ENCODE measurements at regions of chr5 and their contacts with region 1.

Region 1: DNA sequence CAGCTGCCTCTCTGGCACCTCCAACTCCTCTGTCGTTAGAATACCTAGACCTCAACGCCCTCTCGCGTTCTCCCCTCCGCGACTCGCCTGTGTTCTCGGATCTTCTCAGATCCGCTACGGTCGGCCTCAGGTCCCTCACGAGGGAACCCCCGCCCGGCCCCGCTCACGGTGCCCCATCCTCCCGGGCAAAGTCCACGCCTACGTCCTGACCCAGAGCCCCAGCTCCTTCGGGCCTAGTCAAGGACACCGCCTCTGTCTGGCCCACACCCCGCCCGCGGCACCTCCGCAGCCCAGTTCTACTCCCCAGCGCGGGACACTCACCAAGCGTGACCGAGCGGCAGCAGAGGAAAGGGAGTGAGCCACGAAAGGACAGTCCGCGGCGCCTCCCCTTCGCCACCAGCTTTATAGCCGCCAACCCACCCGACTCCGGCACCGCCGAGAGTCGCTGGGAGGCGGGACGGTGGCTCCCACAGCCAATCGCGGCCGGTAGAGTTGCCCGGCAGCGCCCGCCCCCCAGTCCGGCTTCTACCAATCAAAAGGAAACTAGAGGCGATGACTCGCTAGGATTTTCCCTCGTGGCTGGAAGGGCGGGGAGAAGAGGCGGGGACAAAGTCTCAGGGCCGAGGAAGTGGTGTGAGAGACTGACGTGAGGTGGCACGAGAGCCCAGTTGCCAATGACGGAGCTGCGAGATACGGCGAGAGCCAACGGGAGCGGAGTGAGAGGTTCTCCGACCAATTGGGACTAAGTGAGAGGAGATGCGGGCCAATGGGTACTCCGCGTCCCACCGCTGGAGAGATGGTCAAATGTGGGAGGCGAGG is at the start of gene HMGCS1:
- DNase-seq: peak; percentile 99
- ATAC-seq: peak; percentile 92
- H3K4me3 ChIP-seq: peak within 1 kb of the TSS; percentile 88 to 91
- H3K27ac ChIP-seq: peak within 1 kb of the TSS; percentile 71
- H3K4me1 ChIP-seq: peaks cover 11 to 32% of the 10 kb centered on the region in 2 experiments; a peak in 3 of 4 replicates
- H3K27me3 ChIP-seq: no peaks in the 10 kb centered on the region
- CTCF ChIP-seq: peak in 1 of 3 experiments; percentile 10; a peak in 1 of 6 replicates
- POLR2A ChIP-seq: peak; percentile 52
- RAD21 ChIP-seq: no peak
- total RNA-seq, gene HMGCS1: 52.8 TPM

Region 2: GRCh38 chr5:43120720-43121564 is 192.3 kb before region 1 on chr5 and contains the start of gene ZNF131:
- CTCF ChIA-PET with region 1: no interaction called
- POLR2A ChIA-PET with region 1: interaction called, 5 read pairs
- RAD21 ChIA-PET with region 1: no interaction called
- intact Hi-C with region 1: loop called (anchors 10 kb)
- DNase-seq: peak; percentile 93
- ATAC-seq: peak; percentile 93
- H3K4me3 ChIP-seq: peak within 1 kb of the TSS; percentile 93 to 96
- H3K27ac ChIP-seq: peak within 1 kb of the TSS; percentile 93
- H3K4me1 ChIP-seq: peaks cover 9 to 25% of the 10 kb centered on the region in 2 experiments
- H3K27me3 ChIP-seq: no peaks in the 10 kb centered on the region
- CTCF ChIP-seq: no peak
- POLR2A ChIP-seq: peak; percentile 84
- RAD21 ChIP-seq: no peak
- total RNA-seq, gene ZNF131: 34.1 TPM

Region 3: GRCh38 chr5:43601454-43602260 is 288.4 kb after region 1 on chr5:
- CTCF ChIA-PET with region 1: no interaction called
- POLR2A ChIA-PET with region 1: no interaction called
- RAD21 ChIA-PET with region 1: no interaction called
- intact Hi-C with region 1: no loop called
- DNase-seq: no peak
- ATAC-seq: no peak
- H3K4me3 ChIP-seq: no peak overlapping the region
- H3K27ac ChIP-seq: no peak overlapping the region
- H3K4me1 ChIP-seq: no peaks in the 10 kb centered on the region
- H3K27me3 ChIP-seq: no peaks in the 10 kb centered on the region
- CTCF ChIP-seq: no peak
- POLR2A ChIP-seq: no peak
- RAD21 ChIP-seq: no peak

Measured in HCT116 (cell line).